ENCODE measurements at regions of chr11 and their contacts with region 1.

Region 1: DNA sequence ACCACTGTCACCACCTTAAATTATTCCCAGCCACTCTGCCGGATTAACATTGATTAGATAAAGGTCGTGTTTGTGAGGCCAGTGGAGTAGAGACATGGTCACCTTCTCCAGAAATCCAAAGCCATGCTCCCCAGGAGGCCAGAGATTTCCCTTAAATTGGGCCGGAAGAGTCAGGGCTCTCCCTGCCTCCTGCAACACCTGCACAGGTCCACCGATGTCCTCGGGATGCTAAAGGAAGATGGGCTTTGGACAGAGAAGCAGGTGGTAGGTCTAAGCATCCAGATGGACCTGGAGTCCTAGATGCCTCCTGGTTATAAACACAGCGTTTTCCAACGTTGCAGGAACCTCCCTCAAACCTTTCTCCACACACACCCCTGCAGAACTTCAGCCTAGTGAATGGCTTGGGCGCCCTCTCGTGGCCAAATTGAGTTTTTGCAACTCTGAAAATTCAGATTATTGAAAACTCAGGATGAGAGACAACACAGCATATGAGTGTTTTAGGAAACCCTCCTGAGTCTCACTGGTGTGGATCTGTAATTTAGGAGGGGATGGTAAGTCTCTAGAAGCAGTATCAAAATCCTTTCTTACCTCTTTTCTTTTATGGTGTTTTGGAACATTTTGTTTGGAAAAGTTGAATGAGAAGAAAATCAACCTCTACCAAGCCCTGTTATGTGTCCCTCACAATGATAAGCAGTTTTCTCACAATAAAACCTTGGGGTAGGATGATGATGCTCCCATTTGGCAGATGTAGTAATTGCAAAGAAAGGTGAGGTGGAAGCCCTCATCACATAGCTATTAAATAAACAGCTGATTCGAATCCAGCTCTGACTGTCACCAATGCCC is 109.6 kb downstream of the RRAS2 start:
- DNase-seq: no peak
- H3K4me3 ChIP-seq: no peak overlapping the region
- H3K27ac ChIP-seq: no peak overlapping the region
- H3K4me1 ChIP-seq: peaks cover 0 to 26% (median 12%) of the 10 kb centered on the region in 3 donors
- H3K27me3 ChIP-seq: peaks cover 0 to 22% (median 0%) of the 10 kb centered on the region in 4 donors
- CTCF ChIP-seq: peak; percentile 80 to 94 (median 85)
- POLR2A ChIP-seq: no peak

Region 2: DNA sequence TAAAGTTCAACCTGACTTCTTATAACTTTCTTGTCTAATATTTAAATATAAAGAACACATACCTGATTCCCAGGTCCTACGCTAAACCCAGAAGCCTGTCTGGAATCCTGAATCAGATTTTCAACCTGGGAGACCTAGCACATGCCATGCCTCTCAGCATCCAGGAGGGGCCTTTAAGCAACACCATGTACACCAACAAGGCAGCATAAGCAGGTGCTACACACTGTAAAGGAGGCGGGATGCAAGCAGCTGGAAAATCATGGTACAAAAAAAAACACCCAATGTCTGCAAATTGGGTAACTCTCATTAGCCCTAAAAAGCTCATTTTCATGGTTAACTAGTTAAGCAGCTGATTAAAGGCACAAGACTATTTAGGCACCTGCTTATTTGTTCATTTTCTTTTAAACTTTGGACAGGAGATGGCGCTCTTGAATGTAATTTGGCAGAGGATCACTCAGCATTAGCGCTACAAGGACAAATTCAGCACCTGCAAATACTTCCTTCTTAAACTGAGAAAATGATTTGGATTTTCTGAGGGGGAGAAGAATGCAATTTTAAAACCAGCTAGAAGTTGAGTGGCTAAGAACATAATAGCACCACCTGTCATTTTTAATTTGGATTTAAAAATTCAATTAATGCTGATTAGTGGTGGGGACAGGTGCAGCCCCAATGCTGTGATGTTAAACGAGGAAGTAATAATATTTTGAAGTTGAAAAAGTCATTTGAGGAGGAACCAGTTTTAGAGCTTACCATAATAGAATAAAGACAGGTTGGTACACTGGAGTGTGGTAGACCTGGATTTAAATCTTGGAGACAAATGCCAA is 476.9 kb before region 1 on chr11:
- intact Hi-C with region 1: loop called (anchors 10 kb)
- DNase-seq: no peak
- H3K4me3 ChIP-seq: no peak overlapping the region
- H3K27ac ChIP-seq: no peak overlapping the region
- H3K4me1 ChIP-seq: no peaks in the 10 kb centered on the region
- H3K27me3 ChIP-seq: peaks cover 0 to 12% (median 0%) of the 10 kb centered on the region in 4 donors
- CTCF ChIP-seq: peak; percentile 25 to 62 (median 37)
- POLR2A ChIP-seq: no peak

Region 3: GRCh38 chr11:13955971-13956421 is 293.3 kb before region 1 on chr11:
- intact Hi-C with region 1: loop called (anchors 5 kb)
- DNase-seq: no peak
- H3K4me3 ChIP-seq: no peak overlapping the region
- H3K27ac ChIP-seq: no peak overlapping the region
- H3K4me1 ChIP-seq: no peaks in the 10 kb centered on the region
- H3K27me3 ChIP-seq: peaks cover 0 to 61% (median 1%) of the 10 kb centered on the region in 4 donors
- CTCF ChIP-seq: peak; percentile 68 to 89 (median 86)
- POLR2A ChIP-seq: no peak

Measured in esophagus squamous epithelium (tissue), 5 donors.